IMR-90 (cell line): ENCODE measurements at regions of chr18 and their contacts with region 1.

Region 1: DNA sequence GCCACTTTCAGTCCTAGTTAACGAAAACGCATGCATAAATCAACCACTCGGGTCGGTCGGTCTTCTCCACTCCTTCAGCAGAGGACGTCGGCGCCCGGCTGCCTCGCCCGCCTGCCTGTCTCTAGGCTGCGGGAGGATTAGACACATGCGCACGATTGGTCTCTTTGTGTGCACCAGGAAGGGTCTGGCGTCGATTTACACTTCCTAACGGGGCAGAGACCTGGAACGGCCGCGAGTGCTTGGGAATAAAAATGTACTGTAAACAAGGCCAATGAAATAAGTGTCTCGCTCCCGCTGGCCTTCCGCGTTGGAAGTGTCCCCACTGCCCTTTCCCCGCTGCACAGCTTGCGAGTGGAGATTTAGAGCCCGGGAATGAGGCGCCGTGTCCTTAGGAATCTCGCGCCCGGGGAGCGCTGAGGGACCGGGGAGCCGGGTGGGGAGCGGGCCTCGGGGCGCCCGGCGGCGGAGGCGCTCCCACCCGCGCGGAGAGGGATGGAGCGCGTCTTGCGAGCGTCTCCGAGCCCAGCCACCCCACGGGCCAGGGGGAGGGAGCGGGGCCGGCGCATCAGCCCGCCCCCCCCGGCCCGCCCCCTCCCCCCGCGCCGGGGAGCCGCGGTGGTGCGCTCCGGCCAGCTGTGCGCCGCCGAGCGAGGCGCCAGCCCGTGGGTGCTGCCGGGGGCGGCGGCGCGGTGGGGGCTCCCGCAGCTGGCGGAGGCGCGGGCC is at the start of gene DOK6:
- DNase-seq: peak; percentile 69
- ATAC-seq: peak; percentile 84
- H3K4me3 ChIP-seq: peak within 1 kb of the TSS; percentile 42
- H3K27ac ChIP-seq: peak within 1 kb of the TSS; percentile 51; the same call in 1 of the 2 replicates
- H3K4me1 ChIP-seq: no peaks in the 10 kb centered on the region
- H3K27me3 ChIP-seq: peaks cover 10% of the 10 kb centered on the region
- CTCF ChIP-seq: no peak
- POLR2A ChIP-seq: no peak
- RAD21 ChIP-seq: no peak
- total RNA-seq, gene DOK6: 2.7 and 3.9 TPM in 2 replicates

Region 2: GRCh38 chr18:69365658-69366057 is 34.8 kb before region 1 on chr18:
- CTCF ChIA-PET with region 1: no interaction called
- POLR2A ChIA-PET with region 1: no interaction called
- dilution Hi-C with region 1: no loop called
- in situ Hi-C with region 1: no loop called
- intact Hi-C with region 1: no loop called
- DNase-seq: no peak
- ATAC-seq: no peak
- H3K4me3 ChIP-seq: no peak overlapping the region
- H3K27ac ChIP-seq: no peak overlapping the region
- H3K4me1 ChIP-seq: no peaks in the 10 kb centered on the region
- H3K27me3 ChIP-seq: no peaks in the 10 kb centered on the region
- CTCF ChIP-seq: no peak
- POLR2A ChIP-seq: no peak
- RAD21 ChIP-seq: no peak

Region 3: DNA sequence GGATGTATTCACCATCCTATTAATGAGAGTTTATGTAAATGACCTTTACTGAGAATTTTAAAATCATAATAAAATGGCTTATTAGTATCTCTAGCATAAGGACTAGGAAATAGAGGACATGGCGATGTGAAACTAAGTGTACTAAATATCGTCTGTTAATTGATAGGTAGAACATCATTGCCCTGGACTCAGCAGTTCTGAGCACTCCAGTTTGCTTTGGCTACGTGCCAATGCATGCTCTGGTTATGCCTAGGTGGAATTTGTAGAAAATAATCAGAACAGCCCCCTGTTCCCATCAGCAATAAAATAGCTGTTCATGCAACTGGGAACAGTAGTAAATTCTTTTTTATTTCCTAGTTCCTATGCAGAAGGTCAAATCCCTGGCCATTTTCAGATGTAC is 248.1 kb after region 1 on chr18:
- CTCF ChIA-PET with region 1: no interaction called
- POLR2A ChIA-PET with region 1: no interaction called
- dilution Hi-C with region 1: no loop called
- in situ Hi-C with region 1: no loop called
- intact Hi-C with region 1: no loop called
- DNase-seq: no peak
- ATAC-seq: no peak
- H3K4me3 ChIP-seq: no peak overlapping the region
- H3K27ac ChIP-seq: no peak overlapping the region
- H3K4me1 ChIP-seq: no peaks in the 10 kb centered on the region
- H3K27me3 ChIP-seq: no peaks in the 10 kb centered on the region
- CTCF ChIP-seq: no peak
- POLR2A ChIP-seq: no peak
- RAD21 ChIP-seq: no peak

Region 4: DNA sequence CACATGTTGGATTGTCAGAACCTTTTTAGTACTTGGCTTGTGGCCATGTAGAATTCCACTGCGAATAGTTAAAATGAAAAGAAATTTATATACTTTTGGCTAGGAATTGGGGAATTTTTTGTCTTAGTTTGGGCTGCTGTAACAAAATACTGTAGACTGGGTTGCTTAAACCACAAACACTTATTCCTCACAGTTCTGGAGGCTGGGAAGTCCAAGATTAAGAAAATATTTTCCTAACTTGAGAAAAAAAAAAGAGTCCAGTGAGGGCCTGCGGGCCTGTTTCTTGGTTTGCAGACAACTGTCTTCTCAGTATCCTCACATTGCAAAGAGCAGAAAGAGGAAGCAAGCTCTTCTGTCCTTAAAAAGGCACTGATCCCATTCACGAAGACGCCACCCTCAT is 465.4 kb after region 1 on chr18:
- CTCF ChIA-PET with region 1: no interaction called
- POLR2A ChIA-PET with region 1: no interaction called
- dilution Hi-C with region 1: no loop called
- in situ Hi-C with region 1: no loop called
- intact Hi-C with region 1: loop called (anchors 10 kb)
- DNase-seq: no peak
- ATAC-seq: no peak
- H3K4me3 ChIP-seq: no peak overlapping the region
- H3K27ac ChIP-seq: no peak overlapping the region
- H3K4me1 ChIP-seq: no peaks in the 10 kb centered on the region
- H3K27me3 ChIP-seq: no peaks in the 10 kb centered on the region
- CTCF ChIP-seq: no peak
- POLR2A ChIP-seq: no peak
- RAD21 ChIP-seq: no peak